CD4-positive, alpha-beta T cell (primary cell): ENCODE measurements at regions of chr2 and their contacts with region 1.

Region 1: GRCh38 chr2:234135720-234136221 is 85.3 kb downstream of the SPP2 start:
- DNase-seq: peak; percentile 23 to 77 (median 32)
- ATAC-seq: peak; percentile 66
- H3K4me3 ChIP-seq: no peak overlapping the region
- H3K4me3 Mint-ChIP-seq: no peak overlapping the region
- H3K27ac ChIP-seq: no peak overlapping the region
- H3K27ac Mint-ChIP-seq: peak overlapping the region; percentile 63
- H3K4me1 ChIP-seq: peaks cover 32% of the 10 kb centered on the region
- H3K4me1 Mint-ChIP-seq: peaks cover 37% of the 10 kb centered on the region
- H3K27me3 ChIP-seq: no peaks in the 10 kb centered on the region
- H3K27me3 Mint-ChIP-seq: no peaks in the 10 kb centered on the region
- CTCF ChIP-seq: peak; percentile 84

Region 2: DNA sequence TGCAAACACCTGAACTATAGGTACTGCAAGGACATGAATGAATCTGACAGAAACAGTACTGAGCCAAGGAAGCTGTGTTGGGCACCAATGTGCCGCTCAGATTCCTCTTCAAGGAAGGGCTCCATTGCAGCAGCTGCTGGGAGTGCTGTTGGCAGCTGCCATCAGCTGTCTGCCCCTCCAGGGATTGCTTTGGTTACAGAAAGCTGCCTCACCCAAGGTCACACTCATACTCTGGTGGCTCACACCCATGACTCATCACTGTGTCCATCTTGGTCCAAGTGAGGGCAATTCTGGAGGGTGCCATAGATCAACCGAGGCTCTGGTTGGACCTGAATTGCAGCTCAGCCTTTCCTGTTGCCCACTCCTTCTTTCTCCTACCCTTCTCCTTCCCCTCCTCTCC is 243.0 kb before region 1 on chr2:
- CTCF ChIA-PET with region 1: no interaction called
- POLR2A ChIA-PET with region 1: no interaction called
- intact Hi-C with region 1: no loop called
- DNase-seq: no peak
- ATAC-seq: no peak
- H3K4me3 ChIP-seq: no peak overlapping the region
- H3K4me3 Mint-ChIP-seq: no peak overlapping the region
- H3K27ac ChIP-seq: no peak overlapping the region
- H3K27ac Mint-ChIP-seq: no peak overlapping the region
- H3K4me1 ChIP-seq: no peaks in the 10 kb centered on the region
- H3K4me1 Mint-ChIP-seq: no peaks in the 10 kb centered on the region
- H3K27me3 ChIP-seq: peaks cover 10 to 14% of the 10 kb centered on the region in 2 experiments
- H3K27me3 Mint-ChIP-seq: peaks cover 51% of the 10 kb centered on the region
- CTCF ChIP-seq: no peak

Region 3: GRCh38 chr2:233976690-233977294 is 159.0 kb before region 1 on chr2:
- CTCF ChIA-PET with region 1: no interaction called
- POLR2A ChIA-PET with region 1: no interaction called
- intact Hi-C with region 1: loop called (anchors 1 to 10 kb)
- DNase-seq: peak in 4 of 14 experiments; percentile 40 to 80 (median 80)
- ATAC-seq: peak; percentile 68
- H3K4me3 ChIP-seq: no peak overlapping the region
- H3K4me3 Mint-ChIP-seq: no peak overlapping the region
- H3K27ac ChIP-seq: no peak overlapping the region
- H3K27ac Mint-ChIP-seq: no peak overlapping the region
- H3K4me1 ChIP-seq: peaks cover 17% of the 10 kb centered on the region
- H3K4me1 Mint-ChIP-seq: peaks cover 28% of the 10 kb centered on the region
- H3K27me3 ChIP-seq: no peaks in the 10 kb centered on the region
- H3K27me3 Mint-ChIP-seq: no peaks in the 10 kb centered on the region
- CTCF ChIP-seq: peak; percentile 81

Region 4: GRCh38 chr2:234308813-234309195 is 173.0 kb after region 1 on chr2:
- CTCF ChIA-PET with region 1: interaction called, 12 read pairs
- POLR2A ChIA-PET with region 1: interaction called, 3 read pairs
- intact Hi-C with region 1: no loop called
- DNase-seq: peak; percentile 39 to 94 (median 56)
- ATAC-seq: peak; percentile 86
- H3K4me3 ChIP-seq: no peak overlapping the region
- H3K4me3 Mint-ChIP-seq: peak overlapping the region; percentile 68
- H3K27ac ChIP-seq: peak overlapping the region; percentile 50 to 56
- H3K27ac Mint-ChIP-seq: peak overlapping the region; percentile 88
- H3K4me1 ChIP-seq: peaks cover 25% of the 10 kb centered on the region
- H3K4me1 Mint-ChIP-seq: peaks cover 62% of the 10 kb centered on the region
- H3K27me3 ChIP-seq: no peaks in the 10 kb centered on the region
- H3K27me3 Mint-ChIP-seq: no peaks in the 10 kb centered on the region
- CTCF ChIP-seq: no peak

Region 5: DNA sequence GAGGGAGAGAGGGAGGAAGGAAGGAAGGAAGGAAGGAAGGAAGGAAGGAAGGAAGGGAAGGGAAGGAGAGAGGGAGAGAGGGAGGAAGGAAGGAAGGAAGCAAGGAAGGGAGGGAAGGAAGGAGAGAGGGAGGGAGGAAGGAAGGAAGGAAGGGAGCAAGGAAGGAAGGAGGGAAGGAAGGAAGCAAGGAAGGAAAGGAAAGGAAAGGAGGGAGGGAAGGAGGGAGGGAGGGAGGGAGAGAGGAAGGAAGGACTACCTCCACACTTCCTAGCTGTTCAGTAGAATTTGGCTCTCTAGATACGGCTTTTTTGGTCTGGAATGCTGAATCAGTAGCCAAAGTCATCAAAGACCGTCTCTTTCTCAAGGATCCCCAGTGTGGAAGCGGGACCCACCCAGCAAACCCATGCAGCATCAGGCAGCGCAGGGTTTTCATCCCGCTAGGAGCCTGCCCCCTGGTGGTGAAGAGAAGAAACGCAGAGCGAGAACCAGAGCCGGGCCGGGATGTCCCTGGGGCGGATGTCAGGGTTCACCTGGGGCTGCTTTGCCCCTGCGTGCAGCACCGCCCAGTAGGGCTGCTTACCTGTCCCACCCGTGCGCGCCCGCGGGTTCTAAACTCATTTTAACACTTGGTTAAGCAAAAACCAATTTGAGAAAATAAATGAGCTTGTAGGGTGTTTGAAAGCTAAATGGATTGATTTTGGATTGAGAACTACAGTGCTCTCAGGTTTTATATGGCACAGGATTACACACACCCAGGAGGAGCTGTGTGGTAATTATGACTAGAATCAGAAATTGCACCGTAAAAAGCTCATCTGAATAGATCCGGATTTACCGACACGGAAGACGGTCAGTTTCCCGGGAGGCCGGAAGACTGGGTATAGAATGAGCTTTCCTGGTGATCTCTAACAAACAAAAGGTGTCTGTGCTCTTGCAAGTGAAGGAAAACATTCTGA is 409.2 kb after region 1 on chr2:
- CTCF ChIA-PET with region 1: interaction called, 3 read pairs
- POLR2A ChIA-PET with region 1: interaction called, 3 read pairs
- intact Hi-C with region 1: loop called (anchors 1 to 2 kb)
- DNase-seq: peak; percentile 59 to 86 (median 70)
- ATAC-seq: peak; percentile 93
- H3K4me3 ChIP-seq: no peak overlapping the region
- H3K4me3 Mint-ChIP-seq: no peak overlapping the region
- H3K27ac ChIP-seq: no peak overlapping the region
- H3K27ac Mint-ChIP-seq: no peak overlapping the region
- H3K4me1 ChIP-seq: peaks cover 6% of the 10 kb centered on the region
- H3K4me1 Mint-ChIP-seq: no peaks in the 10 kb centered on the region
- H3K27me3 ChIP-seq: peaks cover 0 to 5% of the 10 kb centered on the region in 2 experiments
- H3K27me3 Mint-ChIP-seq: peaks cover 38% of the 10 kb centered on the region
- CTCF ChIP-seq: peak; percentile 93

Region 6: GRCh38 chr2:235116885-235117492 is 981.2 kb after region 1 on chr2:
- CTCF ChIA-PET with region 1: no interaction called
- POLR2A ChIA-PET with region 1: no interaction called
- intact Hi-C with region 1: loop called in 1 of 2 experiments (anchors 5 kb)
- DNase-seq: peak in 3 of 14 experiments; percentile 22 to 34 (median 34)
- ATAC-seq: no peak
- H3K4me3 ChIP-seq: no peak overlapping the region
- H3K4me3 Mint-ChIP-seq: no peak overlapping the region
- H3K27ac ChIP-seq: no peak overlapping the region
- H3K27ac Mint-ChIP-seq: no peak overlapping the region
- H3K4me1 ChIP-seq: no peaks in the 10 kb centered on the region
- H3K4me1 Mint-ChIP-seq: no peaks in the 10 kb centered on the region
- H3K27me3 ChIP-seq: peaks cover 0 to 5% of the 10 kb centered on the region in 2 experiments
- H3K27me3 Mint-ChIP-seq: peaks cover 32% of the 10 kb centered on the region
- CTCF ChIP-seq: peak; percentile 58